ENCODE measurements at regions of chr7 and their contacts with region 1.

Region 1: GRCh38 chr7:92598310-92598981 is 8.3 kb upstream of the FAM133B start:
- DNase-seq: no peak
- H3K4me3 ChIP-seq: no peak overlapping the region
- H3K27ac ChIP-seq: no peak overlapping the region
- H3K4me1 ChIP-seq: peaks cover 0 to 8% of the 10 kb centered on the region in 2 experiments; a peak in 1 of 4 replicates
- H3K27me3 ChIP-seq: no peaks in the 10 kb centered on the region
- CTCF ChIP-seq: no peak
- EP300 ChIP-seq: no peak
- RAD21 ChIP-seq: no peak

Region 2: GRCh38 chr7:91915401-91916050 is 682.9 kb before region 1 on chr7:
- CTCF ChIA-PET with region 1: no interaction called
- POLR2A ChIA-PET with region 1: no interaction called
- DNase-seq: no peak
- H3K4me3 ChIP-seq: no peak overlapping the region
- H3K27ac ChIP-seq: no peak overlapping the region
- H3K4me1 ChIP-seq: peaks cover 0 to 5% of the 10 kb centered on the region in 2 experiments; a peak in 2 of 4 replicates
- H3K27me3 ChIP-seq: no peaks in the 10 kb centered on the region
- CTCF ChIP-seq: no peak
- EP300 ChIP-seq: no peak
- RAD21 ChIP-seq: no peak

Region 3: DNA sequence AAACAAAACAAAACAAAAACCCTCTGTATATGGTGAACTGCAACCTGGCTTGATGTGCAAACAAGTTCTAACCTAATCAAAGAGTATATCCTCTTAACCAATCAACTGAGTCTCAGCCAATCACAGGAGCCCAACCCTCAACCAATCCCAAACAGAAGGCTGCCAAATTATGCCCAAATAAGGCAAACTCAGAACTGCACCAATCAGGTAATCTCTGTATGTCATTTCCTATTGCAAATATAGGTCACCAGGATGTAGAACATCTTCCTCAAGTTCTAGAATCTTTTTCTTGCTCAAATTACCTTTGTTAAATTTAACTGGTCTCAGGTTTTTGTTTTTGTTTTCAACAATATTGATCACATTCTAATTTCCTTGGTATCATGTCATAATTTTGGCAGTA is 13.4 kb before region 1 on chr7:
- CTCF ChIA-PET with region 1: interaction called, 36 read pairs
- POLR2A ChIA-PET with region 1: no interaction called
- DNase-seq: peak; percentile 33
- H3K4me3 ChIP-seq: no peak overlapping the region
- H3K27ac ChIP-seq: no peak overlapping the region
- H3K4me1 ChIP-seq: peaks cover 11 to 17% of the 10 kb centered on the region in 2 experiments; a peak in 3 of 4 replicates
- H3K27me3 ChIP-seq: no peaks in the 10 kb centered on the region
- CTCF ChIP-seq: no peak
- EP300 ChIP-seq: no peak
- RAD21 ChIP-seq: no peak

Region 4: DNA sequence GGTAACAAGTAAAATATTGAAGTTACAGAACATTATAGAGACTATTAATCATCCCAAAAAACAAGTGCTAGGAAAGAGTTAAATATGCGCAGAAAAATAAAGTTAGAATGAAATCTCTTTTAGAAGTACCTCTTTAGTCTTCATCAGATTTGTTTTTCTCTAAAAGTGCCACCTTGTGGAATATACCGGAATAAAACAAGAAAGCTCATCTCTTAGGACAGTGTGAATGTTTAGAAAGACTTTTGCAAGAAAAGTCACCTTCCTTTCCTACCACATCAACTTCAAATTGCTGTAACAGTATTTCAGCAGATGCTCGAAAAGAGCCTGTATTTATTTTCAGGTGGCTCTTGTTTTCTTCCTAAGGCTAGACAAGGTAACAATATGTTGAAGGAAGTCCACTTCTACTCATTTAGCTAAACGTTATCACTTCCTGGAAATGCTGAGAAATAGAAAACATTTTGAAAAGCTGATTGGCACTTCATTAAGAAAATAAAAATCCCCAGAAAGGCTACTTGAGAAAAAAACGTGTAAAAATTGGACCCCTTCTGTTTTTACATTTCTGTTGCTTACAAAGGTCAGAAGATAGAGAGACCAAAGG is 11.6 kb after region 1 on chr7:
- CTCF ChIA-PET with region 1: interaction called, 126 read pairs
- POLR2A ChIA-PET with region 1: no interaction called
- DNase-seq: peak; percentile 43
- H3K4me3 ChIP-seq: no peak overlapping the region
- H3K27ac ChIP-seq: peak overlapping the region in 1 of 2 experiments; percentile 5; a peak in 1 of 4 replicates
- H3K4me1 ChIP-seq: peaks cover 6 to 25% of the 10 kb centered on the region in 2 experiments
- H3K27me3 ChIP-seq: no peaks in the 10 kb centered on the region
- CTCF ChIP-seq: peak; percentile 66
- EP300 ChIP-seq: no peak
- RAD21 ChIP-seq: peak; percentile 40

Region 5: DNA sequence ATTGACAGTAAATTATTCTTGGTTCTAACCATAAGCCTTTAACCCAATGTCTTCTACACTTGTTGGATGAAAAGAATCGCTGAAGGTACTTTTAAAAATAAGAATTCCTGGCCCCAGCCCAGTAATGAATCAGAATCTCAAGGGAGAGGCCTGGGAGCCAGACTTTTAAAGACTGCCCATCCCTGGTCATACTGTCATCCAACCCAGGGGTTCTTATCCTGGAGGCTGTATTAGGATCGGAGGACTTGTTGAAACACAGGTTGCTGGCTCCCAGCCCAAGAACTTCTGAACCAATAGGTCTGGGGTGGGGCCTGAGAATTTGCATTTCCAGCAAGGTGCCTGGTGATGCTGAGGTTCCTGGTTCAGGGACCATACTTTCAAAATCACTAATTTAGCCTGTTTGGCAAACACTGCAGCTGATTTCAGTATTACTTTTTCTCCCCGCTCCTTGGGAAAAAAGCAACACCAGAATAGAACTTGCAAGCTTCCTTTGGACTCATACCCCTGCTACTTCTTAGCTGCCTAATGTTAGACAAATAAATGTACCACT is 71.2 kb after region 1 on chr7:
- CTCF ChIA-PET with region 1: no interaction called
- POLR2A ChIA-PET with region 1: no interaction called
- DNase-seq: no peak
- H3K4me3 ChIP-seq: no peak overlapping the region
- H3K27ac ChIP-seq: peak overlapping the region in 1 of 2 experiments; percentile 72; a peak in 2 of 4 replicates
- H3K4me1 ChIP-seq: peaks cover 0 to 37% of the 10 kb centered on the region in 2 experiments; a peak in 2 of 4 replicates
- H3K27me3 ChIP-seq: no peaks in the 10 kb centered on the region
- CTCF ChIP-seq: no peak
- EP300 ChIP-seq: no peak
- RAD21 ChIP-seq: no peak

Region 6: DNA sequence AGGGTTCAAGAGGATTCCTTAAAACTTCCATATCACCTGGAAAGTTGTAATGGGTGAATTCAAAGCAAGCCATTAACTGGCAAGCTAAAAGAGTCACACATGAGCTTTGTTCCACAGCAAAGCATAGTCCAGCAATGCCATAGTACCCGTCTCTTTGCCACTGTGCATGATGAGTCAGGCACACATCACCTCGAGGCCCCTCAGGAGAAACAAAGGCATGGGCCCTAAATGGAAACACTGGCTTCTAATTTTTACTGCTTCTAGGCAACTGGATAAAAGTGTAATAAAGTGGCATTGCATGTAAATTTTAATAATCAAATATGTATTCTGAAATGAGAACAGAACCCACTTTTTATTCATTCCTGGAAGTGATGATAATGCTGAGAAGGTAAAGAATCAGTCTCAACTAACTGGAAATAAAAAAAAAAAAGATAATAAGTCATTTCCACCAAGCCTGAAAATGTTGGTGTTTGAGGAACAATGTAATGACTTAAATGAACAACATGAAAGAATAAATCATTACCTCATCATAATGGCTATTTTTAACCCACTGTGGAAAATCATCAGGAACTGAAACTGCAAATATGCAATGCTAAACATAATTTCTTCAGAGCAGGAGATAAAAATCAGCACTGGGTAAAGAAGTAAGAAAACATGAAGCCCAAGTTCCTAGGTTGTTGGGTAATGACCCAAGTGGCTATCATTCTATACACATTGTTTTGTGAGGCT is 133.1 kb after region 1 on chr7:
- CTCF ChIA-PET with region 1: no interaction called
- POLR2A ChIA-PET with region 1: no interaction called
- DNase-seq: no peak
- H3K4me3 ChIP-seq: no peak overlapping the region
- H3K27ac ChIP-seq: peak overlapping the region; percentile 40 to 84; a peak in 3 of 4 replicates
- H3K4me1 ChIP-seq: peaks cover 10 to 53% of the 10 kb centered on the region in 2 experiments
- H3K27me3 ChIP-seq: no peaks in the 10 kb centered on the region
- CTCF ChIP-seq: no peak
- EP300 ChIP-seq: peak in 1 of 2 experiments; percentile 59; a peak in 1 of 4 replicates
- RAD21 ChIP-seq: no peak